ENCODE measurements at regions of chr1 and their contacts with region 1.

Region 1: DNA sequence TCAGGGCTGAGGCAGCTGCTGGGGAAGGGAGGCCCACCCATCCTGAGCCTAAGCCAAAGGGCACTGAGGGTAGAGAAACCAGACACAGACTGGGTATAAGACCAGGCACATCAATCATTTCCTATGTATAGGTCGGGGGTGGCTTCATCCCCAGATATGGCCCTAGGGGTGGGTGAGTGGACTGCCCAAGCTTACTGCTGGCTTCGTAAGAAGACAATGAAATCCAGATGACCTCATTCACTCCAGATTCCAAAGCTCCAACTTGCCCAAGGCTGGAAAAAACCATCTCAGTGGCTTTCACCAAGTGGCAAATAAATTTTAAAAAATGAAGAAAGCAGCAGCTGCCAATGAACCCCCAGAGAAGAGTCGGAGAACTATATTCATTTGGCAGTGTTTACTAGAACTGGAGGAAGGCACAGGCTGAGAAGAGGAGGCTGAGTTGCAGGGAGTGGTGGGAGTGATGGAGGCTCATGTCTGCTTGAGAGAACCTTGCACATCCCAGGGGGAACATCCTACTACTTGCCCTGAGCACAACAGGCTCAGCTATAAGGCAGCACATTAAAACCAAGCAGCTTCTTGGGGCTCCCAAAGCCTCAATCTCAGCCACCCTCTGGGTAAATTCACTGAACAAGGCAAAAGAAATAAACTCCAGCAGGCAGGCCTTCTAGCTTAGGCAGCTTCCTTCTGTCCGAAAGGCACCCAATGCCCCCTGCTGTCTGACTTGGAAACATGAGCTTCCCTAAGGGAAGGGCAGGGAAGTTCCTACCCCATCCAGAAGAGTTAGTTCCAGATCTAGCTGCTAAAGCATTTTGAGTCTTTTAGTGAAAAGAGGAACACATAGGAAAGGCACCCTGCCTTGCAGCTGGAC is 14.1 kb downstream of the PEA15 start:
- DNase-seq: peak; percentile 80
- ATAC-seq: peak; percentile 79
- H3K4me3 ChIP-seq: no peak overlapping the region
- H3K27ac ChIP-seq: peak overlapping the region; percentile 53; the same call in 1 of the 2 replicates
- H3K4me1 ChIP-seq: peaks cover 21% of the 10 kb centered on the region
- H3K27me3 ChIP-seq: no peaks in the 10 kb centered on the region
- CTCF ChIP-seq: peak; percentile 79
- POLR2A ChIP-seq: no peak
- RAD21 ChIP-seq: peak; percentile 79

Region 2: GRCh38 chr1:159924981-159925712 is 294.1 kb before region 1 on chr1 and contains the start of gene TAGLN2:
- CTCF ChIA-PET with region 1: no interaction called
- POLR2A ChIA-PET with region 1: no interaction called
- dilution Hi-C with region 1: no loop called
- in situ Hi-C with region 1: no loop called
- intact Hi-C with region 1: loop called (anchors 10 kb)
- DNase-seq: peak; percentile 90
- ATAC-seq: peak; percentile 82
- H3K4me3 ChIP-seq: peak within 1 kb of the TSS; percentile 83
- H3K27ac ChIP-seq: peak within 1 kb of the TSS; percentile 90
- H3K4me1 ChIP-seq: peaks cover 15% of the 10 kb centered on the region
- H3K27me3 ChIP-seq: no peaks in the 10 kb centered on the region
- CTCF ChIP-seq: no peak
- POLR2A ChIP-seq: peak; percentile 97
- RAD21 ChIP-seq: no peak
- total RNA-seq, gene TAGLN2: 365 and 440 TPM in 2 replicates

Region 3: GRCh38 chr1:160098852-160099561 is 120.3 kb before region 1 on chr1:
- CTCF ChIA-PET with region 1: interaction called, 16 read pairs
- POLR2A ChIA-PET with region 1: no interaction called
- dilution Hi-C with region 1: loop called (anchors 10 kb)
- in situ Hi-C with region 1: no loop called
- intact Hi-C with region 1: loop called (anchors 1 kb)
- DNase-seq: peak; percentile 87
- ATAC-seq: peak; percentile 95
- H3K4me3 ChIP-seq: peak overlapping the region; percentile 64
- H3K27ac ChIP-seq: 0 out of 2 replicates have a peak overlapping the region, but pooled peaks have one; percentile 7
- H3K4me1 ChIP-seq: peaks cover 16% of the 10 kb centered on the region
- H3K27me3 ChIP-seq: no peaks in the 10 kb centered on the region; the same call in 1 of the 2 replicates
- CTCF ChIP-seq: no peak
- POLR2A ChIP-seq: no peak
- RAD21 ChIP-seq: no peak

Region 4: DNA sequence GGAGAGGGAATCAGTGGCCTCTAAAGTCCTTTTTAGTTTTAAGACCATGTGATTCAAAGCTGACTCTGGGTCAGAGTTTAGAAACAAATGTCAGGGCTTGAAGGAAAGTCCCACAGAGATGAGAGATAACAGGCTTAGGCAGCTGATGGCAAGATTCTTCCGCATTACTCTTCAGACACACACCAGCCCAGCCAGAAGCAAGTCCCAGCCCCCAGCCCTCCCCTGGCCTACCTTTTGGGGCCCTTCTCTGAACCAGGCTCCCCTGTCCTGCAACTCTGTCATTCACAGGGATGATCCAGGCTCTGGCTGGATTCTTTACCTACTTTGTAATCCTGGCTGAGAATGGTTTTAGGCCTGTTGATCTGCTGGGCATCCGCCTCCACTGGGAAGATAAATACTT is 42.1 kb before region 1 on chr1:
- CTCF ChIA-PET with region 1: no interaction called
- POLR2A ChIA-PET with region 1: no interaction called
- dilution Hi-C with region 1: no loop called
- in situ Hi-C with region 1: no loop called
- intact Hi-C with region 1: no loop called
- DNase-seq: no peak
- ATAC-seq: no peak
- H3K4me3 ChIP-seq: no peak overlapping the region
- H3K27ac ChIP-seq: no peak overlapping the region
- H3K4me1 ChIP-seq: no peaks in the 10 kb centered on the region
- H3K27me3 ChIP-seq: peaks cover 35% of the 10 kb centered on the region
- CTCF ChIP-seq: no peak
- POLR2A ChIP-seq: no peak
- RAD21 ChIP-seq: no peak

Region 5: DNA sequence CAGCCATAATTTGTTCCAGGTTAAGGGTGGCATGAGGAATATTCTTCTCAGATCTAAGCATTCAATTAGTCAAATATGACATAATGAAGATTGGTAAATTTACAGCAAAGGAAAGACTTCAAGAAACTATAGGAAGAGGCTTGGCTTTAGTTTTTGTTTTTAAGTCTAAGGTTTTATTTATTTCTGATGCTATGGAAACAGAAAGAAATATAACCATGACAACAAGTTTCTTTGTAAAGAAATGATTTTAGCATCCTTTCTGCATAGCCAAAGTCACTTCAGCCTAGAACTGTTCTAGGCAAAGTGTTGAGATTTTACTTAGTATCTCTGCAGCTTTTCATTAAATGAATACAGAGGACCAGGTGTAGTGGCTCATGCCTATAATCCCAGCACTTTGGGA is 13.6 kb after region 1 on chr1:
- CTCF ChIA-PET with region 1: interaction called, 18 read pairs
- POLR2A ChIA-PET with region 1: interaction called, 3 read pairs
- dilution Hi-C with region 1: no loop called
- in situ Hi-C with region 1: no loop called
- intact Hi-C with region 1: no loop called
- DNase-seq: no peak
- ATAC-seq: no peak
- H3K4me3 ChIP-seq: no peak overlapping the region
- H3K27ac ChIP-seq: no peak overlapping the region
- H3K4me1 ChIP-seq: no peaks in the 10 kb centered on the region
- H3K27me3 ChIP-seq: no peaks in the 10 kb centered on the region
- CTCF ChIP-seq: no peak
- POLR2A ChIP-seq: no peak
- RAD21 ChIP-seq: no peak

Measured in IMR-90 (cell line).